ENCODE measurements at regions of chr17 and their contacts with region 1.

Region 1: GRCh38 chr17:74736513-74737298 is at the start of gene RAB37:
- DNase-seq: peak; percentile 89 to 97 (median 95)
- H3K4me3 ChIP-seq: peak within 1 kb of the TSS; percentile 61 to 88 (median 70)
- H3K27ac ChIP-seq: peak within 1 kb of the TSS; percentile 81 to 89
- H3K4me1 ChIP-seq: peaks cover 6 to 61% (median 55%) of the 10 kb centered on the region in 4 experiments
- H3K27me3 ChIP-seq: no peaks in the 10 kb centered on the region

Region 2: DNA sequence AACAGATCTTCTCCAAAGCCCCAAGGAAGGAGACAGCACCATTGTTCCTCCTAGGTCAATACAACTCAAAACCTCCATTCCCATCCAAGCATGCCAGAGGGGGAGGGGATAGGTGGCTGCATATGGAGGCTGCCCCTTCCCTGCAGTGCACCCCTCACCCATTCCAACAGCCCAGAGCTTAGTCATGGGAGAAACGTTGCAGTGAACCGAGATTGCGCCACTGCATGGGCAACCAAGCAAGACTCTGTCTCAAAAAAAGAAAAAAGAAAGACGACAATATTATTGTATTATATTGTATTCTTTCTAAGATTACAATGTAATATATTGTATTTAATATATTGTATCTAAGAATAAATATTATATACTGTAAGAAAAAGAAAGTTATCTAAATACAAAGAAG is 76.8 kb before region 1 on chr17:
- CTCF ChIA-PET with region 1: interaction called, 151 read pairs
- POLR2A ChIA-PET with region 1: interaction called, 23 read pairs
- DNase-seq: no peak
- H3K4me3 ChIP-seq: no peak overlapping the region
- H3K27ac ChIP-seq: no peak overlapping the region
- H3K4me1 ChIP-seq: peaks cover 0 to 13% (median 6%) of the 10 kb centered on the region in 4 experiments
- H3K27me3 ChIP-seq: no peaks in the 10 kb centered on the region

Region 3: DNA sequence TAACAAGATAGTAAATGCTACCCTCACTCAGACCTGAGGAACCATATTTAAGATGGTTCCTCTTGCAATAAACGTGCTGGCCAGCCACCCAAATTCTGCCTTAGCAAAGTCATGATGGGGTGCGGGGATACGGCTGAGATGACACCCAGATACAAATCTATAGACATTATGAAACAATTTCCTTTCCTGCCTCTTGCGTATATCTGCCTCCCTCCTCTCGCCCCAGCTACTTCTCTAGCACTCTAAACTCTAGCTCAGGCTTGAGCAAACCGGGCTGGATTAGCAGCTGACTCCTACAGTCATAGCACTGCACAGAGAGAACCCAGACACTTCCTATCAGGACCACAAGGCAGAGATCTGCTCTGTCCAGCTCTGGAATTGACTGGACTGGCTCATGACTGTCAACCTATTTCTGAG is 46.3 kb before region 1 on chr17:
- CTCF ChIA-PET with region 1: interaction called, 60 read pairs
- POLR2A ChIA-PET with region 1: interaction called, 15 read pairs
- DNase-seq: peak in 2 of 3 donors; percentile 65 to 72
- H3K4me3 ChIP-seq: no peak overlapping the region
- H3K27ac ChIP-seq: no peak overlapping the region
- H3K4me1 ChIP-seq: peaks cover 12 to 44% (median 19%) of the 10 kb centered on the region in 4 experiments
- H3K27me3 ChIP-seq: no peaks in the 10 kb centered on the region

Region 4: DNA sequence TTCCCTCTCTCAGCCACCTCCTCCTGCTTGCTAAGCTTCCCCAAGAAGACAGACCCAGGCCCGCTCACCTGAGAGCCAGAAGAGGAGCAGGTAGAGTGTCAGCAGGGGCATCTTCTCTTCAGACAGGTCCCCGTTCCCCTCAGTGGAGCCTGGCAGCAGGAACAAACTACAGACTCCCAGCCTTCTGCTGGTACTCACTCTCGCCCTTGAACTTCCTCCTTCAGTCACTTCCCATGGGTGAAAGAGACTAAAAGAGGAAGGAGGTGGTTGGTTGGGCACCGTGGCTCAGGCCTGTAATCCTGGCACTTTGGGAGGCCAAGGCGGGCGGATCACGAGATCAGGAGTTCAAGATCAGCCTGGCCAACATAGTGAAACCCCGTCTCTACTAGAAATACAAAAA is 23.9 kb before region 1 on chr17 and contains the start of gene CD300LF:
- CTCF ChIA-PET with region 1: interaction called, 39 read pairs
- POLR2A ChIA-PET with region 1: interaction called, 5 read pairs
- DNase-seq: peak; percentile 64 to 87 (median 84)
- H3K4me3 ChIP-seq: peak within 1 kb of the TSS; percentile 15 to 85 (median 71)
- H3K27ac ChIP-seq: peak within 1 kb of the TSS; percentile 38 to 62
- H3K4me1 ChIP-seq: peaks cover 2 to 36% (median 30%) of the 10 kb centered on the region in 4 experiments
- H3K27me3 ChIP-seq: no peaks in the 10 kb centered on the region

Region 5: DNA sequence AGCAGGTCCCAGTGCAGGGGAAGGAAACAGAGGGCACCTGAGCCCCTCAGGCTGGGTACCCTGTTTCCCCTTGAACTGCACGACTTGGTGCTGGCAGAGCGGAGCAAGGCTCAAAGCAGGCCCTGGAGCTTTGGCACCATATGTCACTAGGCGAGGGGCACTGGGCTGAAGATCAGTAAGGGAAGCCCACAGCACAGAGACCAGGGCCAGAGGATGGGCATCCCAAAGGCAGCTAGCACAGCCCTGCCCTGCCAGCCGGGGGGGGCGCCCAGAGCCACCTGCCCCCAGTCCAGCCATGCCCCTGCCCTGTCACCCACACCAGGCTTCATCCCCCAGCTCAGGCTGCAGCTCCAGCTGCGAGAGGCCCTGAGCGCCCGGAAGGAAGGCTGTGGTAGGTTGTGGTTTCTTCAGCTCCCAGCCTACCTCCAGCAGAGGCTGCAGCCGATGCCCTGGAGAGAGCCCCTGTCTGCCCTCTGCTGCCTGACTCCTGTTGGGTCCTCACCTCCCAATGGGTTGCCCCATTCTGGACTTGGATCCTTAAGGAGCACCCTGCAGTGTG is 22.6 kb after region 1 on chr17:
- CTCF ChIA-PET with region 1: interaction called, 58 read pairs
- POLR2A ChIA-PET with region 1: interaction called, 25 read pairs
- DNase-seq: peak; percentile 83 to 94 (median 93)
- H3K4me3 ChIP-seq: peak overlapping the region in 6 of 7 experiments; percentile 2 to 65 (median 44)
- H3K27ac ChIP-seq: peak overlapping the region; percentile 5 to 76
- H3K4me1 ChIP-seq: peaks cover 8 to 76% (median 66%) of the 10 kb centered on the region in 4 experiments
- H3K27me3 ChIP-seq: no peaks in the 10 kb centered on the region

Region 6: GRCh38 chr17:74833501-74834377 is 97.0 kb after region 1 on chr17:
- CTCF ChIA-PET with region 1: no interaction called
- POLR2A ChIA-PET with region 1: no interaction called
- DNase-seq: peak in 2 of 3 donors; percentile 20 to 28
- H3K4me3 ChIP-seq: no peak overlapping the region
- H3K27ac ChIP-seq: no peak overlapping the region
- H3K4me1 ChIP-seq: no peaks in the 10 kb centered on the region
- H3K27me3 ChIP-seq: no peaks in the 10 kb centered on the region